Esophagus muscularis mucosa (tissue), 4 donors: ENCODE measurements at regions of chr3 and their contacts with region 1.

Region 1: GRCh38 chr3:69410250-69410649 is 24.4 kb upstream of the FRMD4B start:
- DNase-seq: no peak
- H3K4me3 ChIP-seq: no peak overlapping the region
- H3K27ac ChIP-seq: peak overlapping the region in 3 of 4 donors; percentile 60 to 65 (median 61)
- H3K4me1 ChIP-seq: peaks cover 0 to 20% (median 13%) of the 10 kb centered on the region in 4 donors
- H3K27me3 ChIP-seq: no peaks in the 10 kb centered on the region
- CTCF ChIP-seq: peak; percentile 69 to 86 (median 74)
- EP300 ChIP-seq: no peak
- POLR2A ChIP-seq: no peak

Region 2: DNA sequence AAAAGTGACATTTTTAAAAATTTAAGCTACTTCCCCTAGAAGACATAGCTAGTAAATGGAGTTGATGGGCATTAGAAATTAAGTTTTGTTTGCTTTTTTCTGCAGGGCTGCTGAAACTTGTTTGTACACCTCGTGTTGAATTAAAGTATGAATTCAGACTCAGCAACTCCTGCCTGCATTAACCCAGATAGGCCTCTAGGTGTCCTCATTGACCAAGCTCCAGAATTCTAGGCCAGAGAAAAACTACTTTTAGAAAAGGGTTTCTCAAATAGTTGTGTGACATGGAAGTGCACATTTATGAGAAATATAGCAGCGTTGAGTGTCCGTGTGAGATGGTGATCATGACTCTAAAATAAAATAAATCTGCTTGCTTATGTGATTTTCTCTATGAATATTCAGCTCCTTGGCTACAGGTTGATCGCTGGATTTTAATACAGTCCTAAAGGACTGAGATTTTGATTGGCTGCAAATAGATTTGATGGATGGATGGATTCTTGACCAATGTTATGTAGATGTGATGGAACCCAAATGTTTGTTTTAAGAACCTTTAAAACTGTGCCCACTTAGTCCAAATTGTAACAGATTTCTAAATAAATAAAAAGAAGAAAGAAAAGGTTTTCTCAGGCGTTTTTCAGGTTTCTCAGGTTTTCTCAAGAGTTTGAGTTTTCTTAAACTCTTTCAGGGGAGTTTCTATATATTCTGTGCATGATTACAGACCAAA is 248.5 kb before region 1 on chr3:
- intact Hi-C with region 1: loop called (anchors 5 kb)
- DNase-seq: no peak
- H3K4me3 ChIP-seq: no peak overlapping the region
- H3K27ac ChIP-seq: no peak overlapping the region
- H3K4me1 ChIP-seq: no peaks in the 10 kb centered on the region
- H3K27me3 ChIP-seq: no peaks in the 10 kb centered on the region
- CTCF ChIP-seq: peak; percentile 93 to 96 (median 95)
- EP300 ChIP-seq: no peak
- POLR2A ChIP-seq: no peak